Heart left ventricle (tissue), 16 donors: ENCODE measurements at regions of chr3 and their contacts with region 1.

Region 1: GRCh38 chr3:31768479-31769123 is 212.5 kb downstream of the OSBPL10 start:
- DNase-seq: peak in 4 of 5 donors; percentile 43 to 62 (median 56)
- ATAC-seq: peak; percentile 62 to 74 (median 68)
- H3K4me3 ChIP-seq: no peak overlapping the region
- H3K27ac ChIP-seq: no peak overlapping the region
- H3K4me1 ChIP-seq: peaks cover 0 to 7% (median 0%) of the 10 kb centered on the region in 12 donors
- H3K27me3 ChIP-seq: no peaks in the 10 kb centered on the region
- CTCF ChIP-seq: peak; percentile 57 to 82 (median 68)
- POLR2A ChIP-seq: no peak

Region 2: DNA sequence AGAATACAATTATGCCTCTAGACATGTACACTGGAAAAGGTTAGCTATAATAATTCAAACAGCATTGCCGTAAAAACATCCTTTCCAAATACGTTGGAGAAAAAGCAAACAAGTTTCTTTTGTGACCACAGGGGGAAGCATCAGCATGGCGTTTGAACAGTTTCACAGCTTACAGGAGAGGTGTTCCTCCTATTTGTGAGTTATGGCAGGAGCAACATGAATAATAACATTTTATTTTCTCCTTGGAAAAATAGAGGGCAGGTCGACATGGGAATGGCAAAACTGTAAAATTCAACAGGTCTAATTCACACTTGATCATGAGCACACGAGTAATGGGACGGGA is 834.4 kb before region 1 on chr3:
- intact Hi-C with region 1: loop called in 1 of 10 experiments (anchors 5 kb)
- DNase-seq: no peak
- ATAC-seq: no peak
- H3K4me3 ChIP-seq: peak overlapping the region in 2 of 12 donors; percentile 15 to 35
- H3K27ac ChIP-seq: no peak overlapping the region
- H3K4me1 ChIP-seq: peaks cover 0 to 2% (median 0%) of the 10 kb centered on the region in 12 donors
- H3K27me3 ChIP-seq: no peaks in the 10 kb centered on the region
- CTCF ChIP-seq: peak; percentile 9 to 62 (median 36)
- POLR2A ChIP-seq: no peak

Region 3: DNA sequence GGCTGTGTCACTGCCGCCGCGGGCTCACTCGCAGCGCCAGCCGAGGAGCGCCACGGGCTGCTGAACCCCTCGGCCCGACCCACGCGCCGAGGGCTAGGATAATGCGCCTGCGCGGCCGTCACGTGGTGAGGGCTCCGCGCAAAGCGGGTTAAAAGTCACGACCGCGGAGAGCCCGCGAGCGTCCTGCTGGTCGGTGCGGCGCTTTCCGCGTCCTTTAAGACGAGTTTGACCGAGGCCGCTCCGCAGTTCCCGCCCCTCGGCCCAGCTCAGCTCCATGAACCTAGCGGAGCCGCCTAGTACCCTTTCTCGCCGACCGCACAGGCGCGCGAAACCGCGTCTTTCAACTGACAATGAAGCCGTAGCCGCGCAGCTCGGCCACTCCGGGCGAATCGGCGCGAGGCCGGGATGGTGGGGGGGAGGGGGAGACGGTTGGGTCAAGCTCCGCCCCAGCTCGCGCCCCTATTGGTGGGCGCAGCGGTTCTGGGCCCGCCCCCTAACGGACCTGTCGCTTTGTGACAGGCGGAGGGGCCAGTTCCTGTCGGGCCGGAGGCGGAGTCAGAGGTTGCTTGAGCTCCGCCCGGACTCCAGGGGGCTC is 236.5 kb before region 1 on chr3:
- intact Hi-C with region 1: loop called in 1 of 10 experiments (anchors 5 kb)
- DNase-seq: peak; percentile 99 to 100 (median 100)
- ATAC-seq: peak; percentile 96 to 98 (median 98)
- H3K4me3 ChIP-seq: peak overlapping the region; percentile 71 to 95 (median 90)
- H3K27ac ChIP-seq: peak overlapping the region; percentile 76 to 100 (median 98)
- H3K4me1 ChIP-seq: peaks cover 0 to 48% (median 29%) of the 10 kb centered on the region in 12 donors
- H3K27me3 ChIP-seq: no peaks in the 10 kb centered on the region
- CTCF ChIP-seq: peak in 6 of 12 donors; percentile 8 to 44 (median 22)
- POLR2A ChIP-seq: peak; percentile 7 to 80

Region 4: DNA sequence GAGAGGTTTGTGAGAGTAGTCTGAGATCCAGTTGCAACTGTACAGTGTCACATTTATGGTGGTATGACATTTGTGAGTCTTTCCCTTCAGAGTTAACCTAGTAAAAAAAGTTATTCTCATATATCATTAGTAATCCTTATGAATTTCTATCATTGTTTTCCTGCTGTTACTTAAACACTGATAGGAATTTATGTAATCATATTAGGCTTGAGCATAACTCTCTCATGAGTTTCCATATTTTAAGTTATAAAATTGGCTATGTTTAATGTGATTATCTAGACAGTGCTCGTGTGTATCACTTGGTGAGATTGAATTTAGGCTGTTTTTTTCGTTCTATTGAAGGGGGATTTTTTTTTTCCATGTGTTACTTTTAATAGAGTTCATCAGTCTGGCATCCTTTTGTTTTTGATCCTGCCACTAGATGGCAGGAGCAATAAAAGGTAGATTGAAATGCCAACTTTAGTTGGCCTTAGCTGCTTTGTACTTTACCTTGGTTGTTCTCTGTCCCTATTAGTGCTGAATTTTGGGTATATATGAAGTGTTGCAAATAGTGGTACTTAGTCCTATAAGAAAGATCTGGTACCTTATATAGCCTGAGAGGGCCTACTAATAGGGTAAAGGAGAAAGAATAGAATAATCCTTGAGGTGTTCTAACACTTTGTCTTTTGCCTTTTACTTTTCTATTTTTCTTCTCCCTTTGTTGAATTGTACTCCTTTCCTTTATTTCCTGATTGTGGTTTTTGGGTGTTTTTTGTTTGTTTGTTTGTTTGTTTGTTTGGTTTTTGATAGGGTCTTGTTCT is 217.9 kb before region 1 on chr3:
- intact Hi-C with region 1: loop called (anchors 1 to 10 kb)
- DNase-seq: no peak
- ATAC-seq: peak in 3 of 4 donors; percentile 51 to 63 (median 54)
- H3K4me3 ChIP-seq: no peak overlapping the region
- H3K27ac ChIP-seq: no peak overlapping the region
- H3K4me1 ChIP-seq: peaks cover 0 to 66% (median 46%) of the 10 kb centered on the region in 12 donors
- H3K27me3 ChIP-seq: no peaks in the 10 kb centered on the region
- CTCF ChIP-seq: peak; percentile 45 to 78 (median 68)
- POLR2A ChIP-seq: no peak

Region 5: DNA sequence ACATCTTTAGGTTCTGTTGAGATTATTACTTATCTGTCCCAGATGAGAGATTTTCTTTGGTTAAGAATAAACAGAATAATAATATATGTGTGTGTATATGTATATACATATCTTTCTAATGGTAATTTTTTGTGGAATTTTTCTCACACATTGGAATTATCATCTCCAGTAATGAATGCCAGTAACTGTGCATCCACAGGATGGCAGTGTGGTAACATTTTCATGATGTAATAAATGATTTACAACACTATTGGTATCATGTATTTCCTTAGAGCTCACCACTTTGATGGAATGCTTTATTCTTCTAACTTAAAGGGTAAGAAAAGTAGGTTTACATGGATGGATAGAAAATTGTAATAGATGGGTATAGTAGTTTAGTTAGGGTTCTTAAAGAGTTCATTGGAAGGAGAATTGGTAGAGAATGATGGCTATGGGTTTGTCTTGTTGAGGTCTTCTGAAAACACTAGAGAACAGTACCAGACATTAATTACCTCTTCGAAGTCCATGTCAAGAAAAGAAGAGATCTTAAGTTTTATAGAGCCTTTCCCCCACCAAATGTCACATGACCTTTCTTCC is 157.8 kb before region 1 on chr3:
- intact Hi-C with region 1: loop called in 9 of 10 experiments (anchors 2 to 10 kb)
- DNase-seq: no peak
- ATAC-seq: peak in 1 of 4 donors; percentile 42
- H3K4me3 ChIP-seq: no peak overlapping the region
- H3K27ac ChIP-seq: no peak overlapping the region
- H3K4me1 ChIP-seq: peaks cover 0 to 6% (median 0%) of the 10 kb centered on the region in 12 donors
- H3K27me3 ChIP-seq: no peaks in the 10 kb centered on the region
- CTCF ChIP-seq: peak; percentile 34 to 70 (median 50)
- POLR2A ChIP-seq: no peak